Activated CD4-positive, alpha-beta T cell treated with anti-CD3 and anti-CD28 coated beads, Interleukin-2, amount 10 ng/mL, durations not matched to agents 24 days and 14 days (primary cell): ENCODE measurements at regions of chr15 and their contacts with region 1.

Region 1: GRCh38 chr15:88904624-88905327 is 8.4 kb downstream of the MFGE8 start:
- DNase-seq: peak; percentile 98
- H3K4me3 Mint-ChIP-seq: peak overlapping the region; percentile 22
- H3K27ac Mint-ChIP-seq: peak overlapping the region; percentile 64
- H3K4me1 Mint-ChIP-seq: peaks cover 20% of the 10 kb centered on the region
- H3K27me3 Mint-ChIP-seq: no peaks in the 10 kb centered on the region

Region 2: DNA sequence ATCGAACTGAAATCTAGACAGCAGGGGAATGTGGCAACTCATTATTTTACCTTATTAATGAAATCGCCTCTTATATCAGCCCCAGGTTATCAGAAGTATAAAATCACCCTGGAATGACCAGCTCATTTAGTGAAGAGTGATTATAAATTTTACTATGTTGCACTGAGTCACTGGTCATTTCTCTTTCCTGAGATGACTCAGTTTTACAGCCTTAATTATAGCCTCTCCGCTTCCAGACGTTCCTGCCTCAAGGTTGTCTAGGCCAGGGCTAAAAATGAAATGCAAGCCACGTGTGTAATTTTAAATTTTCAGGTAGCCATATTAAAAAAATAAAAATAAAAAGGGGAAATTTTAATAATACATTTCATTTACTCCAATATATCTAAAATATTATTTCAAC is 391.6 kb before region 1 on chr15:
- intact Hi-C with region 1: no loop called
- DNase-seq: no peak
- H3K4me3 Mint-ChIP-seq: no peak overlapping the region
- H3K27ac Mint-ChIP-seq: no peak overlapping the region
- H3K4me1 Mint-ChIP-seq: peaks cover 10% of the 10 kb centered on the region
- H3K27me3 Mint-ChIP-seq: no peaks in the 10 kb centered on the region

Region 3: DNA sequence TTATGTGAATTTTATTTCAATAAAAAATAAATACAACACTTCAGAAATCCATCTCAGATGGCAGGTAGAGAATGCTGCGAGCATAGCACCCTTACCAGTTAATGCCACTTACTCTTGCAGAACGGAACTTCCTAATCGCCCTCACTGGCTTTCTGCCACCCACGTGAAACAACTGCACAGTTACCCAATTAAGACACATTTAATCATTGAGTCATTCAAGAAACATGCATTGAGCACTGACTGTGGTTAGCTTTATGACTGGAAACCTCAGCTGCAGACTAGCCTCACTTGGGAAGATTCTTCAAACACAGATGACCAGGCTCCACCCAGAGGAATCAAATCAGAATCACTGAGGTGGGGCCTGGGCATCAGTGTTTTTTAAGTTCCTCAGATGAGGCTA is 14.0 kb after region 1 on chr15:
- intact Hi-C with region 1: loop called (anchors 1 kb)
- DNase-seq: no peak
- H3K4me3 Mint-ChIP-seq: peak overlapping the region; percentile 23
- H3K27ac Mint-ChIP-seq: peak overlapping the region; percentile 5
- H3K4me1 Mint-ChIP-seq: peaks cover 23% of the 10 kb centered on the region
- H3K27me3 Mint-ChIP-seq: peaks cover 9% of the 10 kb centered on the region

Region 4: DNA sequence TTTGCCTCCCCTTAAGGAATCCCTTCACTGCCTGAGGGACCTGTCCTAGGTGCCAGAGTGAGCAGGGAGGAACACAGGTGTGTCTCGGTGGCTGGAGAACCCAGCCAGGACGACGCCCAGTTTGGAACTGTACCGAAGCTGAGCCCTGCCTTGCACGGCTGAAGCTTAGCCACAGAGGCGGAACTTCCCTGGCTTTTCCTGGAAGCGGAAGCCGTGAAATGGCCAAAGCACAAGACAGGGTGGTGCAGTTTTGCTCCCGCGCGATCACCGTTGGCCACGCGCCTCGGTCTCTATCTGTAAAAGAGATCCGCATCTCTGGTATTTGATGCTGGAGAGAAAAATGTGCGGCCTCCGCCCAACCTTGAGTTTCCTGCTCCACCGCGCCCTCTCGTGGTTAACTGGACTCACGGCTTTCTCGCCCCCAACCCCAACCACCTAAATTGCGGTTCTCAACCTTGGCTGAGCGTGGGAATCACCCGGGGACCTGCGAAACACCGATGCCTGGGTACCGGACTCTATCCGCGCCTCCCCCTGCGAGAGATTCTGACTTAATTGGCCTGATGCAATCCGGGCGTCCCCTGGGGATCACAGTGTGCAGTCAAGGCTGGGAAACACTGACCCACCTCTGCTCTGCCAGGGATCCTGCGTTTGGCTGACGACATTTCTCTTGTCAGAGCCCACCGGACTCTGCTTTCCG is 112.7 kb after region 1 on chr15:
- intact Hi-C with region 1: loop called (anchors 1 kb)
- DNase-seq: peak; percentile 95
- H3K4me3 Mint-ChIP-seq: peak overlapping the region; percentile 74
- H3K27ac Mint-ChIP-seq: no peak overlapping the region
- H3K4me1 Mint-ChIP-seq: peaks cover 19% of the 10 kb centered on the region
- H3K27me3 Mint-ChIP-seq: peaks cover 35% of the 10 kb centered on the region